B cell (primary cell): ENCODE measurements at regions of chr5 and their contacts with region 1.

Region 1: GRCh38 chr5:69189162-69190086 is at the start of gene CENPH:
- DNase-seq: peak; percentile 91
- ATAC-seq: peak; percentile 92
- H3K4me3 ChIP-seq: peak within 1 kb of the TSS; percentile 64 to 96 (median 80)
- H3K4me3 Mint-ChIP-seq: peak within 1 kb of the TSS; percentile 95
- H3K27ac ChIP-seq: peak within 1 kb of the TSS; percentile 30 to 88
- H3K27ac Mint-ChIP-seq: peak within 1 kb of the TSS; percentile 93
- H3K4me1 ChIP-seq: peaks cover 9 to 14% of the 10 kb centered on the region in 2 donors
- H3K4me1 Mint-ChIP-seq: peaks cover 17% of the 10 kb centered on the region
- H3K27me3 ChIP-seq: no peaks in the 10 kb centered on the region
- H3K27me3 Mint-ChIP-seq: no peaks in the 10 kb centered on the region
- CTCF ChIP-seq: no peak
- total RNA-seq, gene CENPH: 11.9 and 12.0 TPM in 2 replicates

Region 2: DNA sequence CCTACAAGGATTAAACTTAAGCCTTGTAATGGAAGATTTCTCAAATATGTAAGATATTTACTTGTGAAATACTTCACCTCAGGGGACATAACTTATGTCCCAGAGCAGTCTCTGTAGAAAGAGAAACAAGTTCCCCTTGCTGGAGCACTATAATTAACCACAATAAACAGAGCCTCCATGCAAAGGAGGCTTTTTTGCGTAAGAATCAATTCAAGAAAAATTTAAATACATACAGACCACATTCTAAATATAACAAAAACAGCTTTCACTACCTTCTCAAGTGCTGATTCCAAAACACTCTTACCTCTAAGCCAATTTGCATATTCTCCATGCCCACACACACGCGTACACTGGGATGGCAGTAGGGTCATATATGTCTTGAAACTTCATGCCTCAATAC is 53.1 kb before region 1 on chr5:
- CTCF ChIA-PET with region 1: no interaction called
- POLR2A ChIA-PET with region 1: no interaction called
- intact Hi-C with region 1: loop called (anchors 2 kb)
- DNase-seq: peak; percentile 64
- ATAC-seq: peak; percentile 87
- H3K4me3 ChIP-seq: no peak overlapping the region
- H3K4me3 Mint-ChIP-seq: peak overlapping the region; percentile 63
- H3K27ac ChIP-seq: peak overlapping the region; percentile 41 to 45
- H3K27ac Mint-ChIP-seq: peak overlapping the region; percentile 90
- H3K4me1 ChIP-seq: peaks cover 5 to 18% of the 10 kb centered on the region in 2 donors
- H3K4me1 Mint-ChIP-seq: peaks cover 29% of the 10 kb centered on the region
- H3K27me3 ChIP-seq: no peaks in the 10 kb centered on the region
- H3K27me3 Mint-ChIP-seq: no peaks in the 10 kb centered on the region
- CTCF ChIP-seq: no peak

Region 3: GRCh38 chr5:69369369-69370121 is 180.1 kb after region 1 on chr5 and contains the starts of genes AK6, RAD17 and TAF9:
- CTCF ChIA-PET with region 1: no interaction called
- POLR2A ChIA-PET with region 1: no interaction called
- intact Hi-C with region 1: loop called (anchors 1 kb)
- DNase-seq: peak; percentile 99
- ATAC-seq: peak; percentile 95
- H3K4me3 ChIP-seq: peak within 1 kb of the TSS; percentile 69 to 89 (median 83)
- H3K4me3 Mint-ChIP-seq: peak within 1 kb of the TSS; percentile 96
- H3K27ac ChIP-seq: peak within 1 kb of the TSS; percentile 96 to 99
- H3K27ac Mint-ChIP-seq: peak within 1 kb of the TSS; percentile 100
- H3K4me1 ChIP-seq: peaks cover 22 to 26% of the 10 kb centered on the region in 2 donors
- H3K4me1 Mint-ChIP-seq: peaks cover 41% of the 10 kb centered on the region
- H3K27me3 ChIP-seq: no peaks in the 10 kb centered on the region
- H3K27me3 Mint-ChIP-seq: no peaks in the 10 kb centered on the region
- CTCF ChIP-seq: no peak
- total RNA-seq, gene AK6: 21.7 and 25.4 TPM in 2 replicates
- total RNA-seq, gene RAD17: 39.6 and 41.0 TPM in 2 replicates
- total RNA-seq, gene TAF9: 41.6 and 42.0 TPM in 2 replicates

Region 4: GRCh38 chr5:69484891-69485290 is 295.5 kb after region 1 on chr5:
- CTCF ChIA-PET with region 1: no interaction called
- POLR2A ChIA-PET with region 1: no interaction called
- intact Hi-C with region 1: no loop called
- DNase-seq: no peak
- ATAC-seq: no peak
- H3K4me3 ChIP-seq: no peak overlapping the region
- H3K4me3 Mint-ChIP-seq: no peak overlapping the region
- H3K27ac ChIP-seq: no peak overlapping the region
- H3K27ac Mint-ChIP-seq: no peak overlapping the region
- H3K4me1 ChIP-seq: no peaks in the 10 kb centered on the region
- H3K4me1 Mint-ChIP-seq: no peaks in the 10 kb centered on the region
- H3K27me3 ChIP-seq: no peaks in the 10 kb centered on the region
- H3K27me3 Mint-ChIP-seq: peaks cover 29% of the 10 kb centered on the region
- CTCF ChIP-seq: no peak